ENCODE measurements at regions of chr14 and their contacts with region 1.

Region 1: DNA sequence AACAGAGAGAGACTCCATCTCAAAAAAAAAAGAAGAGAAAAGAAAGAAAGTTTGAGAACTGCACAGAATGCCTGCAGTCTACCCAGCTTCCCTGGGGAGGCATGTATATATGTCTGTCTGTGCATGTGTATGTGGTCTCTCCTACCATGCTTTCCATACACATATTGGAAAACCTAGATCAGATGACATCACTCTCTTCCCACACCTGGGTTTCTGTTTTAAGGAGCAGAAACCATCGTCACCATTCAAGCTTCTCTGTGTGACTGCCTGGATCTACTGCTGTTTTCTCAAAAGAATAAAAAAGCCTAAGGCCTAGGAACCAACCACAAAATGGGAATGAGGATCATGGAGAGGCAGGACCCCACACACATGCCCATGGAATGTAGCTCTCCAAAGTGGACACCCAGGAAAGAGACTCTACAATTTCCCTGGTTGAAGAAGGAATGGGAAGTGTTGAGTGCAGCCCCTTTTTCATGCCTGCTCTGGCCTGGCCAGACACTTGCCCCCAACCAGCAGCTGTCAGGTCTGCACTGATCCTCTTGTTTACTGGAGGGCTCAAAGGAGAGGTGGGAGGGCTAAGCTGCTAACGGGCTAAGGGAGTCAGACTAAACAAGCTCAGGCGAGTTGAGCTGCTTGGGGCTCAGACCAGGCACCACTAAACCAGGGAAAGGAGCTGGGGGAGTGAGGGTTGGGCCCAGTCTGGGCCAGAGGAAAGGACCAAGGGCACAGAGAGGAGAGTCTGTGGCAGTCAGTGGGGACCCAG is 7.7 kb upstream of the PCK2 start:
- DNase-seq: no peak
- ATAC-seq: no peak
- H3K4me3 ChIP-seq: no peak overlapping the region
- H3K27ac ChIP-seq: no peak overlapping the region
- H3K4me1 ChIP-seq: peaks cover 10 to 15% of the 10 kb centered on the region in 2 experiments
- H3K27me3 ChIP-seq: no peaks in the 10 kb centered on the region
- CTCF ChIP-seq: no peak
- EP300 ChIP-seq: no peak
- POLR2A ChIP-seq: no peak
- RAD21 ChIP-seq: no peak

Region 2: DNA sequence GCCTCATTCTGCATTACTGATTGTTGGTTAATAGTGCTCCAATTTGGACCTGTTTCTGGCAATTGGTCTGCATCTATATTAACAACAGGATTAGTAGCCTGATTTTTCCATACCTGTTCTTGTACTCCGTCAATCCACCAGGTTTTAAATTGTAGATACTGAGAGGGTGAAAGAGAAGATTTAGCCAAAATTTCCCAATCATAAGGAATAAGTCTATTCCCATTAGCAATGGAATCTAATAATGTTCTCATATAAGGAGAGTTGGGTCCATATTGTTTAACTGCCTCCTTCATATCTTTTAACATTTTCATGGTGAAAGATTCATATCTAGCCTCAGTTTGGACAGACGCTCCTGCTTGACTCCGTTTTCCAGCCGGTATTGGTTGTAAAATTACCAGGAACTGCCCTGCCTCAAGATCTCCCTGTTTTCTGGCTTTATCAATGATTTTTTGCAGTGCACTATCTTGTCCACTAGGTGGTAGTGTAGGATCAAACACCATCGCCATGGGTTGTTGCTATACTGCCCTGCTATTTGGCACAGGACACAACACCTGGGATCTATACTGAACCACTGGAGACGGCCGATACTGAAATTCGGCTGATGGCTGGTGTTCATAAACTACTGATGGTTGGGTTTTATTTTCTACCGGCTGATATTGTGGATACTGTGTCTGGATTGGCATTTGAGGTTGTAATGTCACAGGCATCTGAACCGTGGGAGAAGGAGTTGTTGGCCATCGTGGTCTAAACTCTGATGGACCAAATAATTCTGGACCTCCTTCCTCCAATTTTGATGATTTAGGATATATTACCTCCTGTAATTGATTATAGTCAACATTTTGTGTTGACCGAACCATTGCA is 72.5 kb before region 1 on chr14:
- CTCF ChIA-PET with region 1: interaction called, 4 read pairs
- POLR2A ChIA-PET with region 1: no interaction called
- in situ Hi-C with region 1: loop called (anchors 5 kb)
- intact Hi-C with region 1: loop called (anchors 10 kb)
- DNase-seq: peak; percentile 59 to 69 (median 60)
- ATAC-seq: peak; percentile 83
- H3K4me3 ChIP-seq: no peak overlapping the region
- H3K27ac ChIP-seq: no peak overlapping the region
- H3K4me1 ChIP-seq: no peaks in the 10 kb centered on the region; a peak in 1 of 5 replicates
- H3K27me3 ChIP-seq: no peaks in the 10 kb centered on the region
- CTCF ChIP-seq: peak; percentile 65 to 83 (median 66)
- EP300 ChIP-seq: no peak
- POLR2A ChIP-seq: no peak
- RAD21 ChIP-seq: peak; percentile 82 to 84

Region 3: DNA sequence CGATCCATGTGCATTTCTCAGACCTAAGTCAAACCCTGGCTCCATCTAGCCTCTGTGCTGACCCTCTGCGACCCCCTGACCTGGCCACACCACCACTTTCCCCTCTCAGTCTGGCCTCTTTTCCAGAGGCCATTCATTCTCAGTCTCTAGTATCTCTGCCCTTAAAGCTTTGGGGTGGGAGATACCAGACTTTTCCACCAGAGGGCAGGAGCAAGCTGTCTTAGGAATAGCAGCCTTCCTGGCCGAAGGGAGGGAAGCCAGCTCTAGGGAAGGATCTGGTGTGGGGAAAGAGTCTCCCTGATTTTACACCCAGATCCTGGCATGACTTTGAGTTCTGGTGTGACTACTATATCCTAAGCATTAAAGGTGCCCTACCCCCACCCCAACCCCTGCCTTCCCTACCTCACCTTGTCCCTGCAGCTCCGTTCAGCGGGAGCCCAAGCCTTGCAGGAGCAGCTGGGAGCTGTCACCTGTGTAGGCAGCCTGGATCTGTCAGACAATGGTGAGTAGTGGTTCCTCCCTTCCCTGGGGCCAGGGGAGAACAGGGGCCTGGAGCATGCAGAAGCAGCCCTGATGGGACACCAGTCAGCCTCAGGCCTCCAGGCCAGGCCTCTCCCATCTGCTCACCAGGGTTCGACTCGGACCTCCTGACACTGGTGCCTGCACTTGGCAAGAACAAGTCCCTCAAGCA is 28.0 kb before region 1 on chr14:
- CTCF ChIA-PET with region 1: interaction called, 10 read pairs
- POLR2A ChIA-PET with region 1: interaction called, 3 read pairs
- in situ Hi-C with region 1: loop called (anchors 5 kb)
- intact Hi-C with region 1: loop called (anchors 1 kb)
- DNase-seq: peak in 2 of 4 experiments; percentile 59 to 64
- ATAC-seq: peak; percentile 92
- H3K4me3 ChIP-seq: no peak overlapping the region
- H3K27ac ChIP-seq: no peak overlapping the region
- H3K4me1 ChIP-seq: peaks cover 0 to 6% of the 10 kb centered on the region in 2 experiments; a peak in 3 of 5 replicates
- H3K27me3 ChIP-seq: peaks cover 0 to 19% of the 10 kb centered on the region in 2 experiments; a peak in 2 of 5 replicates
- CTCF ChIP-seq: peak; percentile 72 to 82 (median 76)
- EP300 ChIP-seq: no peak
- POLR2A ChIP-seq: no peak
- RAD21 ChIP-seq: peak; percentile 83 to 92

Region 4: DNA sequence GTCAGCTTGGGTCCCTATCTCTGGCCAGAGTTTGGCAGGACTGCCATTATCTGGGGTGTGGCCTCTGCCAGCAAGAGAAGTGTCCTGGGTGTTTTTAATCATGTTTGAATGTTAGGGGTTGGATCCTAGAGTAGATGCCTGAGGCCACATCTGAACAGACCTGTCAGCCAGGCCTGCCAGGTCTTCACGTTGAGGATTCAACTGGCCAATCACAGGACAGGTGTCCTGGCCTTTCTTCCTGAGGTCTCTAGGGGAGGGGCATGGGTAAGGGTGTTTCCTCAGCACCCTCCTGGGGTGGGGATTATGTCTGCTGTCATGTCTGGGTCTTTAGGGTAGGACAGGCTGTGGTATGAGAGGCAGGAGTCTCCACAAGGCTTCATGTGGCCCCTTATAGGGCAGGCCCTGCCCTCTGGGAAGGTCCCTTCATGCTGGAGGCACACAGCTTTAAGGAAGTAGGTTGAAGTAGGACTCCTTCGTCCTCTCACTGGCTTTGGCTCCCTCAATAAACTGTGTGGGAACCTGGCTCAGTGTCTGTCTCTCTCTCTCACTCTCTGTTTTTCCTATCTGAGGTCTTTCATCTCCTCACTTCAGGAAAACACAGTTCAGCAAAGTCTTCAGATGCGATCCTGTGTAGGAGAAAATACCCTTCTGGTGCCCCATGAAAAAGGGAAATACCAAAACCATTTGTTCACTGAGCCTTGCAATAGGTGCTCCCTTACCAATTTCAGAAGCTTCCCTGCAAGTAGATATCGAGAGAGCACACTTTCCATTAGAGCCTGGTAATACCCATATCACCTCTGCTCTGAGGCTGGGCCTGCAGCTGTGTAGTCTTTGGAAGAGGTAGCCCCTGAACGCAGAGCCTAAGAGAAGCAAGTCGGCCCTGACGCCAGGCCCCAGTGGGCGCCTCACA is 37.4 kb after region 1 on chr14:
- CTCF ChIA-PET with region 1: no interaction called
- POLR2A ChIA-PET with region 1: no interaction called
- in situ Hi-C with region 1: no loop called
- intact Hi-C with region 1: no loop called
- DNase-seq: no peak
- ATAC-seq: peak; percentile 72
- H3K4me3 ChIP-seq: no peak overlapping the region
- H3K27ac ChIP-seq: no peak overlapping the region; the same call in 2 of the 3 replicates
- H3K4me1 ChIP-seq: peaks cover 6 to 12% of the 10 kb centered on the region in 2 experiments; a peak in 4 of 5 replicates
- H3K27me3 ChIP-seq: no peaks in the 10 kb centered on the region
- CTCF ChIP-seq: no peak
- EP300 ChIP-seq: no peak
- POLR2A ChIP-seq: no peak
- RAD21 ChIP-seq: no peak